PC-9 (cell line): ENCODE measurements at regions of chr15 and their contacts with region 1.

Region 1: GRCh38 chr15:48880070-48880634 is 2.2 kb downstream of the EID1 start:
- DNase-seq: no peak
- H3K4me3 ChIP-seq: no peak overlapping the region
- H3K27ac ChIP-seq: no peak overlapping the region
- H3K4me1 ChIP-seq: peaks cover 17% of the 10 kb centered on the region
- H3K27me3 ChIP-seq: no peaks in the 10 kb centered on the region
- CTCF ChIP-seq: no peak

Region 2: GRCh38 chr15:48963524-48964113 is 83.5 kb after region 1 on chr15 and contains the start of gene SHC4:
- CTCF ChIA-PET with region 1: no interaction called
- POLR2A ChIA-PET with region 1: no interaction called
- intact Hi-C with region 1: loop called (anchors 5 kb)
- DNase-seq: peak; percentile 24 to 59
- H3K4me3 ChIP-seq: peak within 1 kb of the TSS; percentile 70
- H3K27ac ChIP-seq: no peak within 1 kb of the TSS
- H3K4me1 ChIP-seq: 0 out of 2 replicates have a peak, but pooled peaks cover 8% of the 10 kb centered on the region
- H3K27me3 ChIP-seq: no peaks in the 10 kb centered on the region
- CTCF ChIP-seq: no peak; the same call in 1 of the 2 replicates
- total RNA-seq, gene SHC4: 0.18 and 0.44 TPM in 2 replicates